Heart left ventricle (tissue), 16 donors: ENCODE measurements at regions of chr1 and their contacts with region 1.

Region 1: DNA sequence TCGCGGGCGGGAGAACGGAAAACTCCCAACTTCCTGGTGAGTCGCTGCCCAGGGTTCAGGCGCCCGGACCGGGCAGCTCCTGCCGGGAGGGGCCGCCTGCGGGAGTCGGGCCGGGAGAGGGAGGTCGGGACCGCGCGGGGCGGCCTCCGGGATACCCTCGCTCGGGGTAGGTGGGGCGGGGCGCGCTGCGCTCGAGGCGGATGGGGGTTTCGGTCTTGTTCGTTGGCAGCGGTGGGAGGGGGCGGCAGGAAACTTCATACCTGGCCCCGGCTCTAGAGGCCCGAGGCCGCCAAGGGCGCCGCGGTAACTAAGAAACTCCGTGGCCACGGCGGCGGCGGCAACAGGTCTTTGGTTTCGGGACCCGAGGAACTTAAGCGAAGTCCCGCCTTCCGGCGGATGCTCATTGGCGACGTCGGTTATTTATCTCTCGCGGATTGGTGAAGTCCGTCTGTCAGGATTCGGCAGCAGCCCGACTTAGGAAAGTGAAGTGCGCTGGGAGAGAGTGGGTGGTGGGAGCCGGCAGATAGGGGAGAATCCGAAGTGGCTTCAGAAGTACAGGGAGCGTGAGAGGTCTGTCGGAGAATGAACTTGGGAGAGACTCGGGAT is 546 bp downstream of the NEK7 start:
- DNase-seq: peak; percentile 92 to 93 (median 93)
- ATAC-seq: peak; percentile 65 to 79 (median 76)
- H3K4me3 ChIP-seq: peak overlapping the region; percentile 75 to 100 (median 89)
- H3K27ac ChIP-seq: peak overlapping the region; percentile 97 to 99 (median 98)
- H3K4me1 ChIP-seq: peaks cover 0 to 65% (median 48%) of the 10 kb centered on the region in 12 donors
- H3K27me3 ChIP-seq: no peaks in the 10 kb centered on the region
- CTCF ChIP-seq: no peak
- POLR2A ChIP-seq: peak in 1 of 2 donors; percentile 62

Region 2: DNA sequence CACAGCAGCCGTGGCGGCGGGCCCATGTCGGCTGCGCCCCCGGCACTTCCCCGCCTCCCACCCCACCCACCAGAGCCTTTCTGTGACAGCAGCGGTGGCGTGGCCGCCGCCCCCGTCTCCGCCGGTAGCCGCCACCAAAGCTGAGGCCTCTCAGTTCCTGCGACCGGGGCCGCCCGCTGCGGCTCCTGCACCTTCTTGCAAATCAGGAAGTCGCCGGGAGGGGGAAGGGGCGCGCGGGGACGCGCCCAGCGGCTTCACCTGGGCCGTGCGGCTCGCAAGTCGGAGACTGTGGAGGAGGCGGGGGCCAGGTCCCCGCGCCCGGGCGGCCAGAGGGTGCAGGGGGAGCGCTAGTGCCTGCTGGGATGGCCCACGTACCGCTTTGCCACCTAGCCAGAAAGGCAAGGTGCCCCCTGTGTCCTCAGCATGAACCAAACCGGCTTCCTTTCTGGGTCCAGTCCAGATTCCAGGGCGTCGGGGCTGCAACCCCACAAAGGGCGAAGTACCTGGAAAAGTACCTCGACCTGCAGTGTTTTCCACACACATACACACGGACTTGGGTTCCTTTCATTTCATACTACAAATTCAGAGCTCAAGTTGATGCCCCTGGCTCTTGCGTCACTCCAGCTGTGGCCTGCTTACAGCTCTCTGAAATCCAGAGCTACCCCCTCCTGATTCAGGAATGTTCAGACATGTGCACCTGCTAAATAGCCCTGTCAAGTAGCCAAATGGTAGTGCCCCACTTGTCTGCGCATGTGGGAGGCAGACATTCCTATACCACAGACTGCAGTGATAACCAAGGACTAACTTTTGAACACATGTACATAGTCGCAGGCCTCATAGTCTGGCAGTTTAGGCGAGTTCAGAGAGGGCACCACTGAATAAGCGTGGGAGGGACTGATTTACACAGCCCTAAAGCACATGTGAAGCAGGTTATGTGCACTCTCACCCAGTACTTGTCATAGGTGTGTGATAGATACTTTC is 381.8 kb before region 1 on chr1 and contains the start of gene DENND1B:
- intact Hi-C with region 1: loop called in 1 of 10 experiments (anchors 10 kb)
- DNase-seq: peak; percentile 68 to 90 (median 82)
- ATAC-seq: peak; percentile 69 to 84 (median 80)
- H3K4me3 ChIP-seq: peak within 1 kb of the TSS; percentile 65 to 87 (median 76)
- H3K27ac ChIP-seq: peak within 1 kb of the TSS; percentile 75 to 95 (median 91)
- H3K4me1 ChIP-seq: peaks cover 0 to 75% (median 35%) of the 10 kb centered on the region in 12 donors
- H3K27me3 ChIP-seq: no peaks in the 10 kb centered on the region
- CTCF ChIP-seq: peak in 1 of 12 donors; percentile 22
- POLR2A ChIP-seq: peak in 1 of 2 donors; percentile 14
- total RNA-seq, gene DENND1B: 16.0 to 31.4 (median 24.0) TPM

Region 3: DNA sequence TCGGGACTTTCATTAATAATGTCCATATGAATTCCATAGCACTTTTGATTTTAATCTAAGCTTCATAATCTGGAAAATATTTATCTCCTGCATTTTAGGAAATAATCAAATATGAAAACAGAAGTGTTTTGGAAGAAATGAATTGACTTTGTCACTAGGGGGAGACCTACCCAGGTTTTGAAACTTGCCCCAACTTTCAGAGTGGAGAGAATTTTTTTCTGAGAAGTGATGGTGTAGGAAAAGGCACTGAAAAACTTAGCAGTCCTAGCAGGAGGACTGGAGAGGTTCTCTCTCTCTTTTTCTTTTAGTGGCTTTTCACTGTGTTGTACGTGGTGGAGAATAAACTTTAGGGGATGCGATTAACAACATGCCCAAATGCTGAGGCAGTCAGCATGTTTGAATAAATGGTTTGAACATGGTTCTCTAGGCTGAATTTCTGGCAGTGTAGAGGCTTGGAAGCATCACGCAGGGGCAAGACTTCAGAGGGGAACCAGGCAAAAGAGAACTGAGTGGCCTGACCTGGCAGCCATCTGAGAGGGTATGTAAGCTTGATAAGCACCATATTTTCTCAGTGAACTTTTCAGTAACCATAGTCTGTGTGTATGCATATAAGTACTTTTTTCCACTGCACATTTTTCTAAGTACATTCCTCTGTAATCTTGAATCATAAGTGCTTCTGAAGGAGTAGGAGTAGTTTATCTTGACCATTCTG is 68.8 kb before region 1 on chr1:
- intact Hi-C with region 1: loop called in 5 of 10 experiments (anchors 2 to 5 kb)
- DNase-seq: no peak
- ATAC-seq: peak in 3 of 4 donors; percentile 13 to 67 (median 56)
- H3K4me3 ChIP-seq: peak overlapping the region in 1 of 12 donors; percentile 11
- H3K27ac ChIP-seq: no peak overlapping the region
- H3K4me1 ChIP-seq: peaks cover 0 to 8% (median 0%) of the 10 kb centered on the region in 12 donors
- H3K27me3 ChIP-seq: no peaks in the 10 kb centered on the region
- CTCF ChIP-seq: peak; percentile 17 to 72 (median 67)
- POLR2A ChIP-seq: no peak

Region 4: GRCh38 chr1:198199105-198199504 is 41.8 kb after region 1 on chr1:
- intact Hi-C with region 1: loop called in 3 of 10 experiments (anchors 5 to 10 kb)
- DNase-seq: no peak
- ATAC-seq: no peak
- H3K4me3 ChIP-seq: no peak overlapping the region
- H3K27ac ChIP-seq: no peak overlapping the region
- H3K4me1 ChIP-seq: peaks cover 0 to 82% (median 43%) of the 10 kb centered on the region in 12 donors
- H3K27me3 ChIP-seq: no peaks in the 10 kb centered on the region
- CTCF ChIP-seq: no peak
- POLR2A ChIP-seq: no peak

Region 5: GRCh38 chr1:198220428-198220827 is 63.1 kb after region 1 on chr1:
- intact Hi-C with region 1: no loop called
- DNase-seq: no peak
- ATAC-seq: peak in 3 of 4 donors; percentile 49 to 66 (median 63)
- H3K4me3 ChIP-seq: no peak overlapping the region
- H3K27ac ChIP-seq: peak overlapping the region in 8 of 12 donors; percentile 6 to 61 (median 27)
- H3K4me1 ChIP-seq: peaks cover 0 to 30% (median 14%) of the 10 kb centered on the region in 12 donors
- H3K27me3 ChIP-seq: no peaks in the 10 kb centered on the region
- CTCF ChIP-seq: no peak
- POLR2A ChIP-seq: no peak

Region 6: DNA sequence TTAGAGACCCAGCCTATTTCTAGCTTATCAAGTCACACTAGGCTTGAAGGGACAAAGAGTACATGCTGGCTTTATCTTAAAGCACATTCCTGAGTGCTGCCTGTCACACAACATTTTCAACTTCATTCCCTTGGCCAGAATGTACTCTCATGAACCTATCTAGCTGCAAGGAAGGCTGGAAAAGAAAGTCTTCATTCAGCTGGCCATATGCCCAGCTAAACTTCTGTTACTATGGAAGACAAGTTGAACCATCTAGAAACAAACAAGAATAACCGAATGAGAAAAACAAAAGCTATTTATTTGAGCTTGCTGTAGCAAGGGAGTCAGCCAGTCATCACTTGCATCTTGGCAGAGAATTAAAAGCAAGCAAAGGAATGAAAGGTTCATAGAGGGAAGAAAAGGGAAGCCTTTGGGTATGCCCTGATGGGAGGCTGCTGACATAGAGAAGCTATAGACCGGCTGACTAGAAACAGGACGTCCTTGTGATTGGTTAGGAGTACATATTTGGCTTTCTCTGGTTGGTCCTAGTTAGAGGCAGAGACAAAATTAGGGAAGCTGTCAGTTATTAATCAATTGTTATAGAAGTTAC is 107.8 kb after region 1 on chr1:
- intact Hi-C with region 1: loop called in 8 of 10 experiments (anchors 2 to 10 kb)
- DNase-seq: peak in 4 of 5 donors; percentile 38 to 56 (median 52)
- ATAC-seq: peak; percentile 95 to 97 (median 96)
- H3K4me3 ChIP-seq: no peak overlapping the region
- H3K27ac ChIP-seq: peak overlapping the region; percentile 46 to 87 (median 78)
- H3K4me1 ChIP-seq: peaks cover 0 to 76% (median 37%) of the 10 kb centered on the region in 12 donors
- H3K27me3 ChIP-seq: no peaks in the 10 kb centered on the region
- CTCF ChIP-seq: no peak
- POLR2A ChIP-seq: no peak

Region 7: DNA sequence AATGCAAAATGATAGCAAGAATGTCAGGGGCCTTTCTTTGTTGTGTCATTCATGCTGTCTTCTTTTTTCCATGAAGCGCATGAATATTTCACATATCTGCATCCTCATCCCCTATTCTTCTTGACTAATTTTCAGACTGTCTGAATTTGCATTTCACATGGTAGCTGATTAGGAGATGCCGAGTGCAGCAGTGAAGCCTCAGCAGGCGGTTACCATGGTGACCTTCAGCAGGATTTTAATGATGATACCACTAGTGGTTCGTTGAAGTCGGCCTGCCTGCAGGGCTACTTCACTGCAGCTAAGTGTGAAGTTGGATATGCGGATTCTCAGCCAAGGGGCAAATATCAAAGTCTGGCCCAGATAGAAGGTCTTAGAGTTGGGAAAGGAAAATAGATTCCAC is 141.3 kb after region 1 on chr1:
- intact Hi-C with region 1: loop called in 2 of 10 experiments (anchors 10 kb)
- DNase-seq: no peak
- ATAC-seq: no peak
- H3K4me3 ChIP-seq: no peak overlapping the region
- H3K27ac ChIP-seq: no peak overlapping the region
- H3K4me1 ChIP-seq: peaks cover 0 to 12% (median 0%) of the 10 kb centered on the region in 12 donors
- H3K27me3 ChIP-seq: no peaks in the 10 kb centered on the region
- CTCF ChIP-seq: no peak
- POLR2A ChIP-seq: no peak